Esophagus muscularis mucosa (tissue), 4 donors: ENCODE measurements at regions of chr1 and their contacts with region 1.

Region 1: GRCh38 chr1:6745073-6745472 is 40.2 kb upstream of the CAMTA1 start:
- DNase-seq: no peak
- H3K4me3 ChIP-seq: no peak overlapping the region
- H3K27ac ChIP-seq: peak overlapping the region in 3 of 4 donors; percentile 86 to 90 (median 89)
- H3K4me1 ChIP-seq: peaks cover 14 to 40% (median 38%) of the 10 kb centered on the region in 4 donors
- H3K27me3 ChIP-seq: no peaks in the 10 kb centered on the region
- CTCF ChIP-seq: no peak
- EP300 ChIP-seq: no peak
- POLR2A ChIP-seq: no peak

Region 2: DNA sequence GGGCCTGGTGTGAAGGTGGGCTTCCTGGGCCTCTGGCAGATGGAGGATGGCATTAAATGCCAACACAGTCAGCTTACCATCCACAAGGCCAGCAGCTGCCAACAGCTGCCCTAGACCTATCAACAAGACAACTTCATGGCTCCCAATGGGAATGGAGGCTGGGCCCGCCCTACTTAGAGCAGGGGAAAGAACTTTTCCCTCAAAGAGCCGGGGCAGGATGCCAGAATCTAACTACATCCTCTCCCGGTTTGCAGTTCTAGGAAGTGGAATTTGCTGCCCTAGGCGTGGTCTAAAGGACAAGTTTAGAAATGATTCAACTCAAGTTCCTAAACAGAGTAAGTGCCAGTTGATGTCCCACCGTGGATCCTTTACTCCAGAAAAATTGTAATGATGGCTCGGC is 522.4 kb before region 1 on chr1:
- intact Hi-C with region 1: no loop called
- DNase-seq: no peak
- H3K4me3 ChIP-seq: no peak overlapping the region
- H3K27ac ChIP-seq: peak overlapping the region; percentile 5 to 47 (median 34)
- H3K4me1 ChIP-seq: peaks cover 6 to 31% (median 8%) of the 10 kb centered on the region in 4 donors
- H3K27me3 ChIP-seq: no peaks in the 10 kb centered on the region
- CTCF ChIP-seq: no peak
- EP300 ChIP-seq: no peak
- POLR2A ChIP-seq: no peak

Region 3: DNA sequence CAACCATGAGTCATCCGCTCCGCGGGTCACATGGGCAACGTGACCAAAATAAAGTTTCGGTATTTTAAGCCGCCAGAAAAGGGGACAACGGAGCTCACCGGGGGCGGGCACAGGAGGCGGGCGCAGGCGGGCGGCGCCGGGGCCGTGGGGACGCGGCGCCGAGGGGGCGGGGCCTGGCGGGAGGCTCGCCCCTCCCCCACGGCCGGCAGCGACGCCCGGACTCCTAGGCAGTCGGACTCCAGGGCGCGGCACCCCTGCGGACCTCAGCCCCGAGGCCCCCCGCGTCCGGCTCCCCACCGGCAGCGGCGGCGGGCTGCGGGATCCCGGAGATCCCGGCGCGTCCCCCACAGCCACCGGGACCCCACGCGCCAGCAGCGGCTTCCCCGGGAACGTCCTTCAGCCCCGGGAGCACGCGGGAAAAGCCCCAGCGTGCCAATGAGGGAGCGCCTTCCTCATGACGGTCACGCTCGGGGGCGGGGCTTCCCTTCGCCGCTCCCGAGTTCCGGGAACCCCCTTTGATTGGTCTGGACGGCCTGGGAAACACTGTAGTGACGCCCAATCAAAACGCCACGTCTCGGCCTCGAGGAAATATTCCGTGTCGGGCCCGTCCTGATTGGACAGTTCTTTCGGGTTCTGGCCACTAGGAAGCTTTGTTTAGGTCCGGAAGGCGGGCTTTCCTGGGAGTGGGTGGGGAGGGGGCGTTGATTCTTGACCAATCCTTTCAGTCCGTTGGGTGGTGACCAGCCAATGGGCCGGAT is 39.7 kb after region 1 on chr1:
- intact Hi-C with region 1: loop called (anchors 5 kb)
- DNase-seq: peak; percentile 100
- H3K4me3 ChIP-seq: peak overlapping the region; percentile 73 to 90 (median 88)
- H3K27ac ChIP-seq: peak overlapping the region; percentile 95 to 100 (median 98)
- H3K4me1 ChIP-seq: peaks cover 20 to 51% (median 46%) of the 10 kb centered on the region in 4 donors
- H3K27me3 ChIP-seq: no peaks in the 10 kb centered on the region
- CTCF ChIP-seq: no peak
- EP300 ChIP-seq: no peak
- POLR2A ChIP-seq: peak; percentile 94

Region 4: DNA sequence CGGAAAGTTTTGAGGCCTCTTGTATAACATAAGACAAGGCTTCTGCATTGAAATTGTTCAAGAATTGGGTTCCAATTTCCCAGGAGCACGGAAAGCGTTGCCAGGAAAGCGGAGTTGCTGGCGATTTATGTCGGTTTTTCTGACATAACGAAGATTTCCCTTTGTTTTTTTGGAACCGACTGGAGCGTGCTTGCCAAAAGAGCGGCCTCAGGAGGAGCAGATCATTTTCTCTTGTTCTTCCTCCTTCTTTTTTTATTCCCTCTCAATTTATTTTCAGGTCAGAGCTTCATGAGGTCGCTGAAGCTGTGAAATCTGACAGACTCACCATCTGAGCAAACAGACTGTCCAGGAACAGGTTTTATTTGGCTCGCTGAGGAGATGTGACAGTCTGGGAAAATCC is 315.7 kb after region 1 on chr1:
- intact Hi-C with region 1: no loop called
- DNase-seq: no peak
- H3K4me3 ChIP-seq: no peak overlapping the region
- H3K27ac ChIP-seq: no peak overlapping the region
- H3K4me1 ChIP-seq: no peaks in the 10 kb centered on the region
- H3K27me3 ChIP-seq: peaks cover 0 to 32% (median 0%) of the 10 kb centered on the region in 4 donors
- CTCF ChIP-seq: no peak
- EP300 ChIP-seq: no peak
- POLR2A ChIP-seq: no peak